Calu3 (cell line): ENCODE measurements at regions of chr2 and their contacts with region 1.

Region 1: GRCh38 chr2:223837287-223838061 is at the start of gene AP1S3:
- DNase-seq: peak; percentile 91
- H3K4me3 Mint-ChIP-seq: peak within 1 kb of the TSS; percentile 88
- H3K27ac Mint-ChIP-seq: peak within 1 kb of the TSS; percentile 89
- H3K4me1 Mint-ChIP-seq: peaks cover 34% of the 10 kb centered on the region
- H3K27me3 Mint-ChIP-seq: no peaks in the 10 kb centered on the region
- CTCF ChIP-seq: no peak
- total RNA-seq, gene AP1S3: 108 and 119 TPM in 2 replicates

Region 2: GRCh38 chr2:223641097-223641496 is 196.4 kb before region 1 on chr2:
- CTCF ChIA-PET with region 1: no interaction called
- intact Hi-C with region 1: no loop called
- DNase-seq: no peak
- H3K4me3 Mint-ChIP-seq: no peak overlapping the region
- H3K27ac Mint-ChIP-seq: no peak overlapping the region
- H3K4me1 Mint-ChIP-seq: no peaks in the 10 kb centered on the region
- H3K27me3 Mint-ChIP-seq: no peaks in the 10 kb centered on the region
- CTCF ChIP-seq: no peak

Region 3: DNA sequence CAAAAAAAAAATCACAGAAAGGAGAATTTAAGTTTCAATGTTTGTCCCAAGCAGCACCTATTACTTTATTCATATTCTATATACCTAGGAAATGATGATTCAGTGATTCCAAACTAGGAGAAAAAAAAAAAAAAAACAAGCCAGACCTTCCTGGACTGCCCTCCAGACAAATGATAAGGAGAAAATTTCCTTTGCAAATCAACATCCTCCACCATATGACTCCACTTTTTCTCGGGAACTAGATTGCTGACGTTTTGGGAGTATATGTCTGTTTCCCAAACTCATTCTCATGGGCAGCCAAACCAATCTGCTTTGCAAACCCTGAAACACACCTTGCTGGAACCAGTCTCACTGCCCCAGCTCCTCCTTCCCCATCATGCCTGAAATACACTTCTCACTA is 16.9 kb before region 1 on chr2:
- CTCF ChIA-PET with region 1: interaction called, 5 read pairs
- intact Hi-C with region 1: loop called (anchors 2 kb)
- DNase-seq: no peak
- H3K4me3 Mint-ChIP-seq: no peak overlapping the region
- H3K27ac Mint-ChIP-seq: peak overlapping the region; percentile 10
- H3K4me1 Mint-ChIP-seq: peaks cover 60% of the 10 kb centered on the region
- H3K27me3 Mint-ChIP-seq: no peaks in the 10 kb centered on the region
- CTCF ChIP-seq: no peak